ENCODE measurements at regions of chr3 and their contacts with region 1.

Region 1: DNA sequence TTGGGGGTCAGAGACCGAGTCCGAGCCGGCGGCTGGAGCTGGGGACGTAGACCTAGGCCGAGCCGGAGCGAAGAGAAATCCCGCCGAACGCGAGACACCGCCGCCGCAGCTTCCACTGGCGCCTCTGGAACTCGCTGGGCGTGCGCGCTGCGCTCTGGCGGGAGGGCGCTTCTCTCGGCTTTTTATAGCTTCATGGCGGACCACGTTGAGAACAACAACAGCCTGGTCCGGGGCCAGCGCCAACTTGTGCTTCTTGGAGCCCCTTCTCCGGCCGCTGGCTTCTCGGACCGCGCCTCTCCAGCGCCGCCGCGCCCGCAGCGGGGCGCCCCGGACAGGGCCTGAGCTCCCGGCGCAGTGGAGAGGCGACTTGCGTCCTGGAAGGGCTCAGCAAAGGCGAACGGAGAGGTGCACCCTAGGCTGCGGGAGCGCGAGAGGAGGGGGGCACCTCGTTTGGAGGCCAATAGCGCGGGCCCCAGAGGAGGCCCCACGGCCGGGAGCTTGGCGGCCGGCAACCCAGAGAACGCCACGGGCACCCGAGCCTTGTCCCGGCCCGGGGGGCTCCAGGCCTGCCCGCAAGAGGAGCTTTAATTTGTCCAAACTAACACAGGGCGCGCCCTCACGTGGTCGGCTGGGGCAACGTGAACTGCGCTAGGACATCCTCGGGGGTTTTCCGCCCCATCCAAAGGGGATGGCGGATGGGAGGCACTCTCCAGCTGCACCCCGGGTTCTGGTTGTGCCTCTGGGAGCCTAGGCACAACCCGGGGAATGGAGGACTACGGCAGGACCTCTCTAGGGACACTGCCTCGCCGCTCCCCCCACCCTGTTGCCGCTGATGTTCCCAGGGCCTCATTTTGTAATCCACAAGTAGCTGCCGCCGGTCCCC is 37.7 kb downstream of the HMCES start:
- DNase-seq: peak; percentile 88
- H3K4me3 Mint-ChIP-seq: peak overlapping the region; percentile 81
- H3K27ac Mint-ChIP-seq: peak overlapping the region; percentile 80
- H3K4me1 Mint-ChIP-seq: peaks cover 32% of the 10 kb centered on the region
- H3K27me3 Mint-ChIP-seq: no peaks in the 10 kb centered on the region

Region 2: GRCh38 chr3:128650096-128651050 is 666.0 kb before region 1 on chr3 and contains the start of gene RPN1:
- intact Hi-C with region 1: loop called (anchors 1 kb)
- DNase-seq: peak; percentile 94
- H3K4me3 Mint-ChIP-seq: peak within 1 kb of the TSS; percentile 90
- H3K27ac Mint-ChIP-seq: peak within 1 kb of the TSS; percentile 92
- H3K4me1 Mint-ChIP-seq: peaks cover 26% of the 10 kb centered on the region
- H3K27me3 Mint-ChIP-seq: no peaks in the 10 kb centered on the region
- total RNA-seq, gene RPN1: 190 and 194 TPM in 2 replicates

Region 3: GRCh38 chr3:129160891-129161859 is 155.2 kb before region 1 on chr3 and contains the start of gene ISY1:
- intact Hi-C with region 1: loop called (anchors 1 kb)
- DNase-seq: peak; percentile 88
- H3K4me3 Mint-ChIP-seq: peak within 1 kb of the TSS; percentile 97
- H3K27ac Mint-ChIP-seq: peak within 1 kb of the TSS; percentile 99
- H3K4me1 Mint-ChIP-seq: peaks cover 34% of the 10 kb centered on the region
- H3K27me3 Mint-ChIP-seq: no peaks in the 10 kb centered on the region
- total RNA-seq, gene ISY1: 72.3 and 75.4 TPM in 2 replicates

Region 4: GRCh38 chr3:129278439-129278970 is 37.9 kb before region 1 on chr3 and contains the start of gene HMCES:
- intact Hi-C with region 1: loop called (anchors 1 kb)
- DNase-seq: peak; percentile 92
- H3K4me3 Mint-ChIP-seq: peak within 1 kb of the TSS; percentile 93
- H3K27ac Mint-ChIP-seq: peak within 1 kb of the TSS; percentile 97
- H3K4me1 Mint-ChIP-seq: peaks cover 48% of the 10 kb centered on the region
- H3K27me3 Mint-ChIP-seq: no peaks in the 10 kb centered on the region
- total RNA-seq, gene HMCES: 59.4 and 61.6 TPM in 2 replicates

Region 5: DNA sequence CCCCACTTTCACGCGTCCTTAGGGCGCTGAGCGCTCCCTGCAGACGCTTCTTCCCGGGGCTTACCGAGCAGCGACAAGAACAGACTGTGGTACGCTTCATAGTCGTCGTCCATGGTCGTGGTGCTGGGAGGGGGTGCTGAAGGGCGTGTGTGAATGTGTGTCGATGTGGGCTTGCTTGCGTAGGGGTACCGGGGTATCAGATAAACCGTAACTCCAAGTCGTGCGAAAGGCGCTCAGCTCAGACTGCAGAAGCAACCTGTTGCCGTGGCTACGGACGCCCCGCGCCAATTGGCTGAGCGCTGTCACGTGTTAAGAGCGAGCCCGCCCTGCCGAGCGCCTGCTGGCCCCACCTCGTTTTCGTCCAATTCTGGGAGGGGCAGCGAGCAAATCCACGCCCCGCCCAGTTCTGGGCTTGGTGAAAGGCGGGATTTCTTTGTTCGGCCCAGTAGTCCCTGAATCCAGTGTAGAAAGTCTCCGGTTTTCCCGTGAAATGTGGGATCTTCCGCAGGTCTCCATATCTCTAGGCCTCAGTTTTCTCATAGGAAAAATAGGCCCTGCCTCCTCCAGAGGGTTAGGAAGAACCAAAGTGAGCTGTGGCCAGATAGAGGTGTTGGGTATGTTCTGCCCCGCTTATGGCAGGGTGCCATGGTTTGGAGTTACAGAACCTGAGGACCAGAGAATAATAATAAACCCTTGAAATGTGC is 112.2 kb after region 1 on chr3 and contains the start of gene EFCAB12:
- intact Hi-C with region 1: loop called (anchors 2 kb)
- DNase-seq: peak; percentile 88
- H3K4me3 Mint-ChIP-seq: peak within 1 kb of the TSS; percentile 41
- H3K27ac Mint-ChIP-seq: peak within 1 kb of the TSS; percentile 69
- H3K4me1 Mint-ChIP-seq: peaks cover 51% of the 10 kb centered on the region
- H3K27me3 Mint-ChIP-seq: peaks cover 4% of the 10 kb centered on the region
- total RNA-seq, gene EFCAB12: 0.32 and 0.34 TPM in 2 replicates

Measured in activated T-helper 1 cell treated with anti-CD3 and anti-CD28 coated beads, Interleukin-12 subunit alpha, Interleukin-12 subunit beta, Interleukin-2, Interleukin-4 antibody, amounts not matched to agents 30 ng/mL and 10 ng/mL and 1 ng/mL, durations not matched to agents 14 hours and 24 hours and 36 hours (primary cell).